Psoas muscle (tissue), 8 donors: ENCODE measurements at regions of chr6 and their contacts with region 1.

Region 1: DNA sequence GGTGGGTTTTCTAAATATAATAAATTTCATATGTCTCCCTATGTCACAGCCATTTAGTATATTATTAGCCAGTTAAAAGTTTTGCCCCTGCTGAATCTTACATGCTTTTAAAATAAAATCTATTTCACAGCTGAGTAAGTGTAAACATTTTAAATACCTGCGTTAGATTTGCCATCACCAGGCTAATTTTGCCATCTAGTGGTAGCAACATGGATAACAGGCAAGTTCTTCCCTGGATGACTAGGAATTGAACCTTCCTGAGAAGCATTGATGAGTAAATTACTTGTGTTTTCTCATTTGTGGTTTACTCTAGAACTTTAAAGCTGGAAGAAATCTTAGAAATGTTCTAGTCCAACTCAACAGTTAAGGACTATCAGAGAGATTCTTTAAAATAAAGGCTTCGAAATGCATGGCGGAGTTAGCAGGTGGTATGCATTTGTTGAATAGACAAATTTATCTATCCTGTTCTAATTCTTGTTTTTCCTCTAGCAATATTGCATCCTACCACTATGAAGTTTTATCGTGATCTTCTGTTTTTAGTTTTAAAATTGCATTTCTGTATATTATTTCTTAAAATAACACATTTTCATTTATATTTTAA is 2.6 kb downstream of the PRSS35 start:
- DNase-seq: no peak
- ATAC-seq: peak in 2 of 4 donors; percentile 41 to 75
- H3K4me3 ChIP-seq: no peak overlapping the region
- H3K27ac ChIP-seq: no peak overlapping the region
- H3K4me1 ChIP-seq: peaks cover 4% of the 10 kb centered on the region
- H3K27me3 ChIP-seq: no peaks in the 10 kb centered on the region
- CTCF ChIP-seq: peak; percentile 85

Region 2: DNA sequence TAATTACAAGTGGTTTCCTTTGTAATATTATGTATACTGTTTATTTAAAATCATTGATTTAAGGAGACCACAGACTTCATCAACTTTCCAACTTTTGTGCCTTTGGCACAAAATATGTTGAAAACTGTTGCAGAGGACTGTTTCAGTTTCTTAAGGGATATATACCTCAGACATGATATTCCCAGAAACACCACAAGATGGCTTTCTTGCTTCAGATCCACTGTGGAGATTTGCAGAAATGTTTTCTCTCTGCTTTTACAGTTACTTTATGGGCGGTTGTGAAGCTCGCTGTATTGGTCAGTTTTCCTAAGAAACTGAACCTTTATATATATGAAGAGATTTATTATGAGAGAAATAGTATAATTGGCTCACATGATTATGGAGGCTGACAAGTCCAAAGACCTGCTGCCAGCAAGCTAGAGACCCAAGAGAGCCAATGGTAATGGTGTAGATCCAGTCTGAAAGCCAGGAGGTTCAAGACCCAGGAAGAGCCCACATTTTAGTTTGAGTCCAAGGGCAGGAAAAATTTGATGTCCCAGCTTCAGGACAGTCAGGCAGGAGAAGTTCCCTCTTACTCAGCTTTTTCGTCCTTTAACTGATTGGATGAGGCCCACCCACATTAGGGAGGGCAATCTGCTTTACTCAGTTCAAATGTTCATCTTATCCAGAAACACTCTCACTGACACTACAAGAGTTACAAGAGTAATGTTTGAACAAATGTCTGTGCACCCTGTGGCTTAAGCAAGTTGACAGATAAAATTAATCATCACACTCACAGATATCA is 96.9 kb before region 1 on chr6:
- intact Hi-C with region 1: loop called (anchors 2 kb)
- DNase-seq: no peak
- ATAC-seq: peak in 2 of 4 donors; percentile 58 to 82
- H3K4me3 ChIP-seq: no peak overlapping the region
- H3K27ac ChIP-seq: no peak overlapping the region
- H3K4me1 ChIP-seq: no peaks in the 10 kb centered on the region
- H3K27me3 ChIP-seq: no peaks in the 10 kb centered on the region
- CTCF ChIP-seq: peak; percentile 61

Region 3: GRCh38 chr6:83546636-83547035 is 31.7 kb after region 1 on chr6:
- intact Hi-C with region 1: no loop called
- DNase-seq: no peak
- ATAC-seq: no peak
- H3K4me3 ChIP-seq: no peak overlapping the region
- H3K27ac ChIP-seq: no peak overlapping the region
- H3K4me1 ChIP-seq: no peaks in the 10 kb centered on the region
- H3K27me3 ChIP-seq: no peaks in the 10 kb centered on the region
- CTCF ChIP-seq: no peak

Region 4: GRCh38 chr6:83558975-83559374 is 44.0 kb after region 1 on chr6:
- intact Hi-C with region 1: no loop called
- DNase-seq: no peak
- ATAC-seq: no peak
- H3K4me3 ChIP-seq: no peak overlapping the region
- H3K27ac ChIP-seq: no peak overlapping the region
- H3K4me1 ChIP-seq: no peaks in the 10 kb centered on the region
- H3K27me3 ChIP-seq: no peaks in the 10 kb centered on the region
- CTCF ChIP-seq: no peak